ENCODE measurements at regions of chr18 and their contacts with region 1.

Region 1: GRCh38 chr18:54776282-54776977 is 51.8 kb upstream of the RAB27B start:
- DNase-seq: peak; percentile 97
- ATAC-seq: peak; percentile 90
- H3K4me3 ChIP-seq: no peak overlapping the region; the same call in 1 of the 2 replicates
- H3K27ac ChIP-seq: peak overlapping the region; percentile 98
- H3K4me1 ChIP-seq: peaks cover 43% of the 10 kb centered on the region
- H3K27me3 ChIP-seq: no peaks in the 10 kb centered on the region
- CTCF ChIP-seq: no peak

Region 2: GRCh38 chr18:54822872-54823845 is 46.7 kb after region 1 on chr18:
- CTCF ChIA-PET with region 1: no interaction called
- POLR2A ChIA-PET with region 1: interaction called, 4 read pairs
- intact Hi-C with region 1: loop called (anchors 1 kb)
- DNase-seq: peak; percentile 87
- ATAC-seq: peak; percentile 80
- H3K4me3 ChIP-seq: no peak overlapping the region
- H3K27ac ChIP-seq: peak overlapping the region; percentile 92
- H3K4me1 ChIP-seq: peaks cover 44% of the 10 kb centered on the region
- H3K27me3 ChIP-seq: no peaks in the 10 kb centered on the region
- CTCF ChIP-seq: no peak